Activated naive CD4-positive, alpha-beta T cell treated with anti-CD3 and anti-CD28 coated beads for 36 hours (primary cell): ENCODE measurements at regions of chr2 and their contacts with region 1.

Region 1: DNA sequence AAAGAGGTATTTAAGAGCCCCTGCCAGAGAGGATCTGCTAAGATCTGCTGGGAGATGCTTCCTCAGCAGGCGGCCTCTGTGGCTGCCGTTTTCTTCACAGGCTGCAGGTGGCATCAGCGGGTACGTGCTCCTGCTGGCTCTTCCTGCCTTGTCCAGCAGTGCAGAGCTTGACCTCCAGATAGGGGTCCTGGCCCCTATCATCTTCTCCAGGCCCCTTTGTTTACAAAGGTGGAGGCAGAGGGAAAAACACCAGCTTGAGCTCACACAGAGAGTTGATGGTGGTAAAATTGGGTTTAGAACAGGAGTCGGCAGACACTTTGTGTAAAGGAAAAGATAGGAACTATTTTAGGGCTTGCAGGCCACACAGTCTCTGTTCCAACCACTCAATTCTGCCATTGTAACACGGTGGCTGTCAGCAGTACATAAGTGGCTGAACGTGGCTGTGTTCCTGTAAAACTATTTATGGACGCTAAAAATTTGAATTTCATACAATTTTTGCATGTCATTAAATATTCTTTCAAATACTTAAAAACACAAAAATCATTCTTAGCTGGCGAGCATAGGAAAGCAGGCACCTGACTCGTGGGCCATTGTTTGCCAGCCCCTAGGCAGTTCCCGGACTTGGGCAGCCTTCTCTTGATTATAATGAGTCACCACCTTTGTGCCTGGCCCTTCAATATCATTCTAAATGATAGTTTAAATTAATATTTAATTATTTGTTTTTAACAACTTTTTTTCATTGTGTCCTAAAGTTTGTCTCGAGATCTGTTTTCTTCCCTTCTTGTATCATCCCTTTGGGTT is 98.2 kb upstream of the B3GNT7 start:
- DNase-seq: peak; percentile 35
- H3K4me3 Mint-ChIP-seq: no peak overlapping the region
- H3K27ac Mint-ChIP-seq: no peak overlapping the region
- H3K4me1 Mint-ChIP-seq: no peaks in the 10 kb centered on the region
- H3K27me3 Mint-ChIP-seq: no peaks in the 10 kb centered on the region

Region 2: GRCh38 chr2:231411831-231412617 is 114.7 kb after region 1 on chr2:
- CTCF ChIA-PET with region 1: interaction called, 4 read pairs
- intact Hi-C with region 1: loop called (anchors 5 kb)
- DNase-seq: peak; percentile 81
- H3K4me3 Mint-ChIP-seq: peak overlapping the region; percentile 45
- H3K27ac Mint-ChIP-seq: no peak overlapping the region
- H3K4me1 Mint-ChIP-seq: peaks cover 7% of the 10 kb centered on the region
- H3K27me3 Mint-ChIP-seq: peaks cover 33% of the 10 kb centered on the region